CD8-positive, alpha-beta T cell (primary cell): ENCODE measurements at regions of chr19 and their contacts with region 1.

Region 1: DNA sequence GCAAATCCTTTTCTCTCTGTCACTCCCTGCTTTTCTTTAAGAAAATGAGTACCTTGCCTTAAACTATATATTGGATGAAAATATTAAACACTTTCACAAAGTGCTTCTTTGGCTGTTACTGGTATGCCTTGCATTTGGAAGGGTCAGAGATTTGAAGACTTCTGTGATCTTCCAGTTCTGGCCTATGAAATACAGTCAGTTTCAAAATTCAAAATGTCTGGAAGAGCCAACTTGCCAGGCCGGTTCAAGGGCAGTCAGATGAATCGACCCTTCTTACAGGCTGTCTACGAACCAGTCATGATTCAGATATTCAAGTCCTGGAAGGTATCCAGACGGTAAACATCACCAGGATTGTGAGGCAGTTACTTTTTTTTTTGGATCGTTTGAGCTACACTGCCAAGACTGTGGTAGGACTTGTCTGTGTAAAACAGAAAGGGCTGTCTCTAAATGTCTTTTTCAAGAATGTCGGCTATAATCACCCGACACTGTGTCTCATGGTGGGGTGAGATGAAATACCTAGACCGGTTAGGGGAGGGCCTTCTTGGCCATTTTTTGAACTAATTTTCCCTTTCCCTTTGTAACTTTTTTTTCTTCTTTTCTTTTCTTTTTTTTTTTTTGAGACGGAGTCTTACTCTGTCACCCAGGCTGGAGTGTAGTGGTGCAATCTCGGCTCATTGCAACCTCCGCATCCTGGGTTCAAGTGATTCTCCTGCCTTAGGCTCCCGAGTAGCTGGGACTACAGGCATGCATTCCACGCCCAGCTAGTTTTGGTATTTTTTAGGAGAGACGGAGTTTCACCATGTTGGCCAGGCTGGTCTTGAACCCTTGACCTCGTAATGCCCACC is 11.2 kb downstream of the ACTN4 start:
- DNase-seq: no peak
- ATAC-seq: no peak
- H3K4me3 ChIP-seq: no peak overlapping the region
- H3K4me3 Mint-ChIP-seq: no peak overlapping the region
- H3K27ac ChIP-seq: peak overlapping the region in 1 of 2 experiments; percentile 22
- H3K27ac Mint-ChIP-seq: no peak overlapping the region
- H3K4me1 ChIP-seq: peaks cover 53% of the 10 kb centered on the region
- H3K4me1 Mint-ChIP-seq: peaks cover 64% of the 10 kb centered on the region
- H3K27me3 ChIP-seq: peaks cover 0 to 14% of the 10 kb centered on the region in 2 experiments
- H3K27me3 Mint-ChIP-seq: peaks cover 27% of the 10 kb centered on the region
- CTCF ChIP-seq: no peak

Region 2: GRCh38 chr19:38569368-38569983 is 89.2 kb before region 1 on chr19:
- CTCF ChIA-PET with region 1: no interaction called
- POLR2A ChIA-PET with region 1: no interaction called
- intact Hi-C with region 1: no loop called
- DNase-seq: no peak
- ATAC-seq: no peak
- H3K4me3 ChIP-seq: no peak overlapping the region
- H3K4me3 Mint-ChIP-seq: no peak overlapping the region
- H3K27ac ChIP-seq: no peak overlapping the region
- H3K27ac Mint-ChIP-seq: no peak overlapping the region
- H3K4me1 ChIP-seq: peaks cover 5% of the 10 kb centered on the region
- H3K4me1 Mint-ChIP-seq: peaks cover 6% of the 10 kb centered on the region
- H3K27me3 ChIP-seq: peaks cover 0 to 2% of the 10 kb centered on the region in 2 experiments
- H3K27me3 Mint-ChIP-seq: peaks cover 4% of the 10 kb centered on the region
- CTCF ChIP-seq: no peak

Region 3: DNA sequence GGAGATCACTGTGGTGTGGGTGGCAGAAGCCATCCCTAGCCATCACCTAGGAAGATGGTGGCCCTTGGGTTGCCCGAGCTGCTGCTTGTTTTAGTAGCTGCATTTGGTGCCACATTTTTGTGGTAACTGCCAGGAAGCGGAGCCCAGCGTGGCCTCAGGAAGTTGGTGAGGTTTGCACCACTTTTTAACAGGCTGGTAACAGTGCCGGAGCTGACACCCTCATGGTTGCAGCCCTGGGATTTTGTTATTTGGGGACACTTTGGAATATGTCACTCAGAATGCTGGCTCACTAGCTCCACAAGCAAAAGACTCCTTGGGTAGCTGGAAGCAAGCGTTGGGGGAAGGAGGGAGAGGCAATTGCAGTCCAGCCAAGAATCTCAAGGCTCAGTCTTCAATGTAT is 10.9 kb after region 1 on chr19:
- CTCF ChIA-PET with region 1: interaction called, 7 read pairs
- POLR2A ChIA-PET with region 1: interaction called, 11 read pairs
- intact Hi-C with region 1: no loop called
- DNase-seq: peak in 7 of 9 experiments; percentile 37 to 73 (median 51)
- ATAC-seq: peak; percentile 42
- H3K4me3 ChIP-seq: peak overlapping the region in 1 of 2 experiments; percentile 1
- H3K4me3 Mint-ChIP-seq: peak overlapping the region; percentile 52
- H3K27ac ChIP-seq: peak overlapping the region in 1 of 2 experiments; percentile 51
- H3K27ac Mint-ChIP-seq: peak overlapping the region; percentile 8
- H3K4me1 ChIP-seq: peaks cover 55% of the 10 kb centered on the region
- H3K4me1 Mint-ChIP-seq: peaks cover 71% of the 10 kb centered on the region
- H3K27me3 ChIP-seq: peaks cover 0 to under 1% of the 10 kb centered on the region in 2 experiments
- H3K27me3 Mint-ChIP-seq: peaks cover 7% of the 10 kb centered on the region
- CTCF ChIP-seq: no peak

Region 4: DNA sequence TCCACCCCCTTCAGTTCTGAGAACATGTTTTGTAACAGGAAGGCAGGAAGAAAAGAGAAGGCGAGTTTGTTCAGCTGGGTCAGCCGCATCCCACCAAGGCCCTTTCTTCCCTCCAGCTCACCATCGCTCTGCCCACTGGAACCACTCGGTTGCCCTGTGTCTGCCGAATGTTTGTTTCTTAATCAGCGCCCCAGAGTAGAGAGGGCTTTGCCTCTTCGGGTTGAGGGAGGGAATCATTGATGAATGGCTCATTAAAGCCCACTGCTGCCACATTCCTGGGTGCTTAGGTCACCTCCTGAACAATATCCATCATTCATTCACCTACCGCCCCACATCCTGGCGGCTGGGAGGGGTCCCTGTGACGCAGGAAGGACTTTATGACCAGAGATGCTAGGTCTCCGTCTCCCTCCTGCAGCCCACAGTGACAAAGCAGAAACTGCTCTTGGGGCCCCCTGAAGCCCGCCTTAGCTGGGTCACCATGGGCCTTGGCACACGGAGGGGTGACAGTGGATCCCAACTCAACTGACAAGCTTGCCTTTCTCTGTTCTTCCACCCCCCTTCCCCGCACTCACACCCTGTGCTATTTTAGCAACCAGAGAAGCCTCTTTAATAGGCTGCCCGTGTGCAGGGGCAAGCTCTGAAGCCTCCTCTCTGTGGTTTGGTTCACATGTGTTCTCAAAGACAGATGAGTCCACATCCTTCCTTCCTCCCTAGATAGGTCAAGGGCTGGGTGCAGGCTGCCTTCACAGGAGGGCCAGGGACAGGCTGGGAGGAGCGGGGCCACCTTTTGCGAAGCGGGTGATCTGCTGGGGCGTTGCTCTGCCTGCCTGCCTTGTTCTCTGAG is 34.9 kb after region 1 on chr19:
- CTCF ChIA-PET with region 1: no interaction called
- POLR2A ChIA-PET with region 1: no interaction called
- intact Hi-C with region 1: loop called in 1 of 2 experiments (anchors 5 kb)
- DNase-seq: peak in 8 of 9 experiments; percentile 22 to 84 (median 58)
- ATAC-seq: peak; percentile 74
- H3K4me3 ChIP-seq: peak overlapping the region; percentile 16 to 19
- H3K4me3 Mint-ChIP-seq: peak overlapping the region; percentile 46
- H3K27ac ChIP-seq: peak overlapping the region; percentile 37 to 72
- H3K27ac Mint-ChIP-seq: peak overlapping the region; percentile 79
- H3K4me1 ChIP-seq: peaks cover 33% of the 10 kb centered on the region
- H3K4me1 Mint-ChIP-seq: peaks cover 54% of the 10 kb centered on the region
- H3K27me3 ChIP-seq: no peaks in the 10 kb centered on the region
- H3K27me3 Mint-ChIP-seq: no peaks in the 10 kb centered on the region
- CTCF ChIP-seq: no peak